Sigmoid colon (tissue), 7 donors: ENCODE measurements at regions of chr11 and their contacts with region 1.

Region 1: GRCh38 chr11:447923-448731 is 2.0 kb upstream of the PTDSS2 start:
- DNase-seq: peak; percentile 97
- H3K4me3 ChIP-seq: peak overlapping the region; percentile 49 to 62 (median 62)
- H3K27ac ChIP-seq: peak overlapping the region; percentile 91 to 94 (median 93)
- H3K4me1 ChIP-seq: peaks cover 0 to 39% (median 33%) of the 10 kb centered on the region in 4 donors
- H3K27me3 ChIP-seq: peaks cover 0 to 17% (median 0%) of the 10 kb centered on the region in 3 donors
- CTCF ChIP-seq: peak; percentile 61 to 94 (median 80)
- EP300 ChIP-seq: peak in 1 of 4 donors; percentile 19
- POLR2A ChIP-seq: peak; percentile 79 to 82

Region 2: GRCh38 chr11:288328-289144 is 159.6 kb before region 1 on chr11 and contains the start of gene PGGHG:
- intact Hi-C with region 1: loop called (anchors 5 kb)
- DNase-seq: peak; percentile 87
- H3K4me3 ChIP-seq: peak within 1 kb of the TSS; percentile 46 to 77 (median 68)
- H3K27ac ChIP-seq: peak within 1 kb of the TSS; percentile 50 to 70 (median 66)
- H3K4me1 ChIP-seq: peaks cover 0 to 21% (median 17%) of the 10 kb centered on the region in 4 donors
- H3K27me3 ChIP-seq: peaks cover 6 to 42% (median 20%) of the 10 kb centered on the region in 3 donors
- CTCF ChIP-seq: no peak
- EP300 ChIP-seq: no peak
- POLR2A ChIP-seq: no peak
- total RNA-seq, gene PGGHG: 11.4 to 15.3 (median 13.6) TPM

Region 3: DNA sequence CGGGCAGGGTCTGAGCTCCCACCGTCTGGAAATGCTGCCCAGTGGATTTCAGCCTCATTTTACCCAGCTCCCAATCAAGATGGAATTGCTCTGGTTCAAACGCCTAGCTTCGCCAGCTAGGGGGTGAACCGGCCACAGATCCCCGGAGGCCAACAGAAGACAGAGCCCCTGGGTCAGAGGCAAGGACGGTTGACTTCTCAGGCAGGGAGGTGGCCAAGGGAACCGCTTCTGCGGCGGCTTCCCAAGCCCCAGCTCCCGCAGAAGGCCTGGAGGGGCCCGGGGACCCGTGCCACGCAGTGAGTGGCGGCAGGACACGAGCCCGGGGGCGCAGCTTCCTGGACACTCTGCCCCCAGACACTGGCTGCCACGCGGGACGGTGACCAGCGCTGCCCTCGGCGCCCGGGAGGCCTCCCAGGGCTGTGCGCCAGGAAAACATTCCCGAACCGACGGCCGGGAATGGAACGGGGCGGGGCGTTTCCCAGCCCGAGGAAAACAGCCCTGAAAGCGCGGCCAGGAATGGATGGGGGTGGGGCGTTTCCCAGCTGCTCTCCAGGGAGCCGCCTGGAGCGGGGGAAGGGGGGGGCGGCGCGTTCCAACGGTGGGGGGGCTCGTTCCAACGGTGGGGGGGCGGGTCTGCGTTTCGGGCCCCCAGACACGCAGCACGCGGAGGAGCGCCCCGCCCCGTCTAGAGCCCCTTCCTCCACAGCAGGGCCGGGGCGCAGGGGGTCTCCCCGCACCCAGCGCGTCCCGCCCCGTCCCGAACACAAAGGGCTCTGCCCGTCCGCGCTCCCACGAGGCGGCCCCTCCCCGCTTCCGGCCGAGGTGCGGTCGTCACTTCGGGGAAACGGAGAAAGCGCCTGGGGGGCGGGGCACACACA is 92.3 kb before region 1 on chr11:
- intact Hi-C with region 1: loop called (anchors 5 kb)
- DNase-seq: peak; percentile 99
- H3K4me3 ChIP-seq: peak overlapping the region; percentile 33 to 48 (median 46)
- H3K27ac ChIP-seq: peak overlapping the region; percentile 98 to 100 (median 100)
- H3K4me1 ChIP-seq: peaks cover 0 to 45% (median 37%) of the 10 kb centered on the region in 4 donors
- H3K27me3 ChIP-seq: peaks cover 0 to 16% (median 4%) of the 10 kb centered on the region in 3 donors
- CTCF ChIP-seq: no peak
- EP300 ChIP-seq: peak in 3 of 4 donors; percentile 70 to 75 (median 75)
- POLR2A ChIP-seq: peak; percentile 19 to 44

Region 4: DNA sequence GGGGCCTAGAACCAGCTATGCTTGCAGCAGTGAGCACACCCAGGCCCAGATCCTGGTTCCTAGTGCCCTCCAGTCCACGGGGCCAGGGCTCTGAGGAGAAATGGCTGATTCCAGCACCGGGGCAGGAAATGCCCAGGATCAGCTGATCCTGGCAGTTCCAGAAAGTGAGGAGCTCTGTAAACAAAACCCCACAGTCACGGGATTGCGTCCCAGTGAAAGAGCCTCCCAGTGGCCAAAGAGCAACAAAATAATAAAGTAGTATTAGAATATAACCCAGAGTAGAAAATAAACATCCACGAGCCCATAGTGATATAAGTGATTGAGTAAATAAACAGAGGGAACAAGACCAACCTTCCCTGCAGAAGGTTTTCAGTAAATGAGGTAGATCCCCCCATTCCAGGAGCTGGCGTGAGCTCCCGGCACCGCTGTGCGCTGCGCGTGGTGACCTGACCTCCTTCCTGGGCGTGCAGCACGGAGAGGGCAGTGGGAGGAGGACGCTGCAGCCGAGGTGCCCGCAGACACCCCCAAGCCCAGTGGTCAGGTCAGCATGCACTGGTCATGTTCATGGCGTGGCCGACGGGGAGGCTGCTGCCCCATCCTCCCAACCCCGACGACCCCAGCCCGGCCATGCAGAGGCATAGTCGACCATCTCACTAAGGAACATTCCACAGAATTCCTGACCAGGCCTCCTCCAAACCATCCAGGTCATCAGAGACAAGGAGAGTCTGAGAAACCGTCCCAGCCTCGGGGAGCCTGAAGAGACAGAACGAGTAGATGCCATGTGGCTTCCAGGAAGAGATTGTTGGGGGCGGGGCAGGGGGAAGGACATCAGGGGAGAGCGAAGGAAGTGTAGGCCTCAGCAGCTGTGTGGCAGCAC is 21.8 kb after region 1 on chr11:
- intact Hi-C with region 1: loop called (anchors 2 kb)
- DNase-seq: peak; percentile 89
- H3K4me3 ChIP-seq: peak overlapping the region; percentile 10 to 37 (median 34)
- H3K27ac ChIP-seq: peak overlapping the region; percentile 71 to 86 (median 82)
- H3K4me1 ChIP-seq: peaks cover 0 to 18% (median 15%) of the 10 kb centered on the region in 4 donors
- H3K27me3 ChIP-seq: no peaks in the 10 kb centered on the region
- CTCF ChIP-seq: peak in 2 of 4 experiments; percentile 23 to 26
- EP300 ChIP-seq: peak in 2 of 4 donors; percentile 39 to 40
- POLR2A ChIP-seq: no peak